HepG2 (cell line): ENCODE measurements at regions of chr6 and their contacts with region 1.

Region 1: DNA sequence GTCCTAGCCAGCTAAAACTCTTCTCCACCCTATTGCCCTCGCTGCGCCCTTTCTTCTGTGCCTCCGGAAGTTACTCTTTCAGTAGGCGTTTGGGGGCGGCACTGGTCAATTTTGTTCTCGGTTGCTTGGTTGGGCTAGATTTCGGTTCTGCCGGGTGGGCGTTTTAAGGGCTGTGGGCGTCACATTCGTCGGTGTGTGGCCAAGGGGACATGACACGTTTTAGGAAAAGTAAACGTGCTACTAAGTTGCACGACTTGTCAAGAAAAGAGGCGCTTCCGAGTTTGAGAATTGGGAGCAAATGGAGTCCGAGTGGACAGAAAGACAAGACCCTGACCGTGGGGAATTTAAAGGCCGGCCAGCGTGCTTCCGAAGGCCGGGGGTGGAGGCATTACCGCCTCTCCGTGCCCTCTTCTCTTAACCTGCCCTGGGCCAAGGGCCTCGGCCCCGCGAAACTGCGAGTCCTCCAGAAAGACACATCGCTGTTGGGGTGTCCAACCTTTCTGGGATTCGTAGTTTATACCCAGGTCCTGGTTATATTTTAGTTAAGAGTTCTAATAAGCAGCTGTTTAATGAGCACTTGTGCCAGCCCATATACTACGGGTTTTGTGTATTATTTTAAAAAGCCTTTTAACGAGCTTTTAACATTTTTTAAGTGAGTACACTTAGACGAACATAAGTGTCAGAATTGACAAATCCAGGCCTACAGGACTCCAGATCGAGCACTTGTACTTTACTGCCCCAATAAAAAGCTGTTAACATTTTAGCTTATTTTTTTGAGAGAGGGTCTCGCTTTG is 661 bp upstream of the BAG6 start:
- DNase-seq: peak; percentile 98
- ATAC-seq: peak; percentile 55
- H3K4me3 ChIP-seq: peak overlapping the region; percentile 73 to 88 (median 77)
- H3K27ac ChIP-seq: peak overlapping the region; percentile 96
- H3K4me1 ChIP-seq: peaks cover 70% of the 10 kb centered on the region
- H3K27me3 ChIP-seq: no peaks in the 10 kb centered on the region; a peak in 2 of 5 replicates
- CTCF ChIP-seq: peak; percentile 63
- EP300 ChIP-seq: no peak; a peak in 3 of 4 replicates
- POLR2A ChIP-seq: peak in 1 of 2 experiments; percentile 72; a peak in 1 of 4 replicates
- RAD21 ChIP-seq: 0 out of 2 replicates have a peak, but pooled peaks have one; percentile 7

Region 2: DNA sequence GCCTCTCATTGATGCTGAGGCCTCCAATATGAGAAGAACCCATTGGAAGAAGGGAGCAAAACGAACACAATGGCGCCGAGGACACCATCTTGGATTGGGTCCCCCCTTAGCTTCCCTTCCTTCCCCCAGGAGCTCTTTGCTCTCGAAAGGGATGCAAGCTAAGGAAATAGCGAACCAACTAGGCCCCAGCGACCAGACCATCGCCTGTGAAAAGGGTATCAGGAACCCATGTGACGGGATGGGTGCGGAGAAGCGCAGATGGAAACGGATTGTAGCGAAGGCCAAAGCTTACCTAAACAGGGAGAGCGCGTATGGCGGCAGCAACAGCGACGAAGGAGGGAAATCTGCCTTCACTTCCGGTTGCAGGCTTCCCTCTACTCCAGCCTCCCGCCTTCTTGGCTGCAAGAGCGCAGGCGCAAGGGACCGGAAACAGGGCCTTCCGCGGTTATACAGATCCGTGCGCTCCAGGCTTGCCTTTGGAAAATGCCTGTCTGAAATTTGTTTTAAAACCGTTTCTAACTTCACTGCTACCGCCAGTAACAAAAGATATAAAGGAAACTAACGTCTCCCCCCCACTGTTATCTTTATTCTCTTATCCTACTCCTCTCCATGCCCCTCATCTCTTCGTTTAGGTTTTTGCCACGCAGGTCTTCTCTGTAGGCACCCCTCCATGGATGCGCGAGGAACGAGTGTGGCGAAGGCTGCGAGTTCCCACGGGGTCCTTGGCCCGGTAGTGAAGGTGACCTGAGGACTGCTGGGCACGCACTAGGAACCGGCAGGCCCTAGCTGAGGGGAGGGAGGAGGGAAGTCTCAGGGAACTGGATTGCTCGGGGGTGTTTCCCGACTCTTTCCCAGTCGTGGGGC is 111.2 kb before region 1 on chr6 and contains the start of gene DDX39B:
- CTCF ChIA-PET with region 1: no interaction called
- POLR2A ChIA-PET with region 1: interaction called, 27 read pairs
- in situ Hi-C with region 1: no loop called
- intact Hi-C with region 1: loop called (anchors 10 kb)
- DNase-seq: peak; percentile 98
- ATAC-seq: peak; percentile 85
- H3K4me3 ChIP-seq: peak within 1 kb of the TSS; percentile 66 to 99 (median 83)
- H3K27ac ChIP-seq: peak within 1 kb of the TSS; percentile 95
- H3K4me1 ChIP-seq: peaks cover 59% of the 10 kb centered on the region
- H3K27me3 ChIP-seq: no peaks in the 10 kb centered on the region; a peak in 2 of 5 replicates
- CTCF ChIP-seq: peak; percentile 39
- EP300 ChIP-seq: peak; percentile 33 to 60; a peak in 2 of 4 replicates
- POLR2A ChIP-seq: peak; percentile 98 to 99
- RAD21 ChIP-seq: peak; percentile 37; the same call in 1 of the 2 replicates
- total RNA-seq, gene DDX39B: 570 and 737 TPM in 2 replicates

Region 3: GRCh38 chr6:31597006-31597405 is 56.1 kb before region 1 on chr6:
- CTCF ChIA-PET with region 1: no interaction called
- POLR2A ChIA-PET with region 1: interaction called, 17 read pairs
- in situ Hi-C with region 1: no loop called
- intact Hi-C with region 1: no loop called
- DNase-seq: peak; percentile 61
- ATAC-seq: peak; percentile 68
- H3K4me3 ChIP-seq: no peak overlapping the region
- H3K27ac ChIP-seq: no peak overlapping the region
- H3K4me1 ChIP-seq: peaks cover 19% of the 10 kb centered on the region
- H3K27me3 ChIP-seq: peaks cover 0 to 3% of the 10 kb centered on the region in 2 experiments; a peak in 1 of 5 replicates
- CTCF ChIP-seq: peak; percentile 68
- EP300 ChIP-seq: no peak
- POLR2A ChIP-seq: no peak
- RAD21 ChIP-seq: peak; percentile 45; the same call in 1 of the 2 replicates

Region 4: DNA sequence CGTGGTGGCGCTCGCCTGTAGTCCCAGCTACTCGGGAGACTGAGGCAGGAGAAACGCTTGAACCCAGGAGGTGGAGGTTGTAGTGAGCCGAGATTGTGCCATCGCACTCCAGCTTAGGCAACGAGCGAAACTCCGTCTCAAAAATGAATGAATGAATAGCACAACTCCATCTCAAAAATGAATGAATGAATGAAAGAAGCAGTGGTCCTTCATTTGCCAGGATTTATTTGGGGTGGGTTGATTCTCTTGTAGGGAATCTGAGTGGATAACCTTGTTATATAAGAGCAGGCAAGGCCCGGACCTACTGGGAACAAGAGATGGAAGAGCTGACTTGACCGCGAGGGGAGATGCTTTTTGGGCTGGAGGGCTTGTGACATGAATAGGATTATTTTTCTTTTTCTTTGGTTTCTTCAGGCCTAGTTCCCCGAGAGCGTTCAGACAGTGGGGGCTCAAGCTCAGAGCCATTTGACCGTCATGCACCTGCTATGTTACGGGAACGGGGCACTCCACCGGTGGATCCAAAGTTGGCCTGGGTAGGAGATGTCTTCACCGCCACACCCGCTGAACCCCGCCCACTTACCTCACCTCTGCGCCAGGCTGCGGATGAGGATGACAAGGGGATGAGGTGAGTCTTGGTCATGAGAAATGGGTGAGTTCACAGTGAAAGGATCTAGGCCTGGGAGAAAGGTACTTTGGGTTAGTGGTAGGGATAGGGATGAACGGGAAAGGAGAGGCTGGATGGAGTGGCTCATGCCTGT is 22.8 kb before region 1 on chr6:
- CTCF ChIA-PET with region 1: no interaction called
- POLR2A ChIA-PET with region 1: interaction called, 20 read pairs
- in situ Hi-C with region 1: no loop called
- intact Hi-C with region 1: no loop called
- DNase-seq: no peak
- ATAC-seq: no peak
- H3K4me3 ChIP-seq: no peak overlapping the region
- H3K27ac ChIP-seq: no peak overlapping the region
- H3K4me1 ChIP-seq: no peaks in the 10 kb centered on the region
- H3K27me3 ChIP-seq: no peaks in the 10 kb centered on the region
- CTCF ChIP-seq: no peak
- EP300 ChIP-seq: no peak
- POLR2A ChIP-seq: no peak
- RAD21 ChIP-seq: no peak

Region 5: GRCh38 chr6:31665501-31666336 is 12.6 kb after region 1 on chr6 and contains the start of gene CSNK2B:
- CTCF ChIA-PET with region 1: no interaction called
- POLR2A ChIA-PET with region 1: interaction called, 438 read pairs
- in situ Hi-C with region 1: no loop called
- intact Hi-C with region 1: loop called (anchors 1 kb)
- DNase-seq: peak; percentile 99
- ATAC-seq: peak; percentile 83
- H3K4me3 ChIP-seq: peak within 1 kb of the TSS; percentile 93 to 98 (median 94)
- H3K27ac ChIP-seq: peak within 1 kb of the TSS; percentile 99
- H3K4me1 ChIP-seq: peaks cover 71% of the 10 kb centered on the region
- H3K27me3 ChIP-seq: no peaks in the 10 kb centered on the region; a peak in 1 of 5 replicates
- CTCF ChIP-seq: peak; percentile 21
- EP300 ChIP-seq: 0 out of 4 replicates have a peak, but pooled peaks of 1 of the 2 experiments have one; percentile 1
- POLR2A ChIP-seq: peak in 1 of 2 experiments; percentile 98; a peak in 2 of 4 replicates
- RAD21 ChIP-seq: peak; percentile 8; the same call in 1 of the 2 replicates
- total RNA-seq, gene CSNK2B: 296 and 316 TPM in 2 replicates

Region 6: GRCh38 chr6:31815025-31815838 is 162.1 kb after region 1 on chr6 and contains the starts of genes HSPA1A and HSPA1L:
- CTCF ChIA-PET with region 1: no interaction called
- POLR2A ChIA-PET with region 1: interaction called, 10 read pairs
- in situ Hi-C with region 1: no loop called
- intact Hi-C with region 1: no loop called
- DNase-seq: peak; percentile 95
- ATAC-seq: peak; percentile 64
- H3K4me3 ChIP-seq: peak within 1 kb of the TSS; percentile 54 to 71 (median 55)
- H3K27ac ChIP-seq: peak within 1 kb of the TSS; percentile 95
- H3K4me1 ChIP-seq: peaks cover 35% of the 10 kb centered on the region
- H3K27me3 ChIP-seq: no peaks in the 10 kb centered on the region
- CTCF ChIP-seq: no peak
- EP300 ChIP-seq: peak in 1 of 2 experiments; percentile 63; a peak in 2 of 4 replicates
- POLR2A ChIP-seq: peak; percentile 99 to 100
- RAD21 ChIP-seq: peak; percentile 22; the same call in 1 of the 2 replicates
- total RNA-seq, gene HSPA1A: 83.5 and 85.0 TPM in 2 replicates
- total RNA-seq, gene HSPA1L: 0.55 and 0.94 TPM in 2 replicates